CD14-positive monocyte (primary cell): ENCODE measurements at regions of chr4 and their contacts with region 1.

Region 1: DNA sequence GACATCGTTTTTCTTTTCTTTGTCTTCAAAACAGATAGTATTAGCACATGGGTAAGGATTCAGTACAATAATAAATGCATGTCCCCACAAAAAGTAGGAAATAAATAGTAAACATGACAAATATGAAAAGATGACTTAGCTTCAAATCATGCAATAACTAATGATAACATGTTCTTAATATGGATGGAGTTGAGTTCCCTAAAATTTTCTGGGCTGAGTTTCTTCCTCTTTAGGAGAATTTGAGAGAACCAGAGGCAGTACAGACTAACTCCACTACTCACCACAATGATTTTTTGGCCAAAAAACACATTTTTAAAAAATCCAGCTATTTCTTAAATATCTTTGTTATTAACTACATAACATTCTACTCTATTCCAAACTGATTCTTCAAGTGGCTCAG is 432.3 kb upstream of the HS3ST1 start:
- DNase-seq: peak; percentile 14 to 48 (median 30)
- H3K4me3 ChIP-seq: no peak overlapping the region
- H3K4me3 Mint-ChIP-seq: no peak overlapping the region
- H3K27ac ChIP-seq: no peak overlapping the region
- H3K27ac Mint-ChIP-seq: no peak overlapping the region
- H3K4me1 ChIP-seq: peaks cover 22 to 38% of the 10 kb centered on the region in 2 donors
- H3K4me1 Mint-ChIP-seq: peaks cover 42% of the 10 kb centered on the region
- H3K27me3 ChIP-seq: no peaks in the 10 kb centered on the region
- H3K27me3 Mint-ChIP-seq: peaks cover 1 to 3% (median 1%) of the 10 kb centered on the region in 3 donors
- CTCF ChIP-seq: no peak

Region 2: DNA sequence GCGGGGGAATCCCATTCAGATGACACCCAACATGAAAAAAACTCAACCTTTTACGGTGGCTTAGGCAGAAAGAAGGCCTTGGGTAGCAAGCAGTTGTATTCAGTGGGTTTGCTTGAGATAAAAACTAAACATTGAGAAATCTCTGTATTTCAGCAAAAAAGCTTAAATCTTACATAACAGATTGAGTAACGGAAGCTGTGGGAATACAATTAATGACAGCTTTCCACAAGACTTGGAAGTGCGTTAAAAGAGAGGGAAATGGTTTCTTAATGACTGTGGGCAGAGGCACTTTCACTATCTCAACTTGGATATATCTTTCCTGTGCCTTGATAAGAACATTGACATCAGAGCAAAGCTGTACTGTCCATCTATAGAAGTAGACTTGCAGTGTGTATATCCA is 13.8 kb before region 1 on chr4:
- intact Hi-C with region 1: loop called in 1 of 2 experiments (anchors 1 kb)
- DNase-seq: peak; percentile 11 to 56 (median 48)
- H3K4me3 ChIP-seq: peak overlapping the region in 2 of 3 experiments; percentile 12 to 63
- H3K4me3 Mint-ChIP-seq: peak overlapping the region; percentile 56 to 75
- H3K27ac ChIP-seq: peak overlapping the region; percentile 61 to 73
- H3K27ac Mint-ChIP-seq: peak overlapping the region; percentile 68 to 88 (median 82)
- H3K4me1 ChIP-seq: peaks cover 36 to 37% of the 10 kb centered on the region in 2 donors
- H3K4me1 Mint-ChIP-seq: peaks cover 46% of the 10 kb centered on the region
- H3K27me3 ChIP-seq: no peaks in the 10 kb centered on the region
- H3K27me3 Mint-ChIP-seq: peaks cover 0 to 1% (median 0%) of the 10 kb centered on the region in 3 donors
- CTCF ChIP-seq: no peak

Region 3: DNA sequence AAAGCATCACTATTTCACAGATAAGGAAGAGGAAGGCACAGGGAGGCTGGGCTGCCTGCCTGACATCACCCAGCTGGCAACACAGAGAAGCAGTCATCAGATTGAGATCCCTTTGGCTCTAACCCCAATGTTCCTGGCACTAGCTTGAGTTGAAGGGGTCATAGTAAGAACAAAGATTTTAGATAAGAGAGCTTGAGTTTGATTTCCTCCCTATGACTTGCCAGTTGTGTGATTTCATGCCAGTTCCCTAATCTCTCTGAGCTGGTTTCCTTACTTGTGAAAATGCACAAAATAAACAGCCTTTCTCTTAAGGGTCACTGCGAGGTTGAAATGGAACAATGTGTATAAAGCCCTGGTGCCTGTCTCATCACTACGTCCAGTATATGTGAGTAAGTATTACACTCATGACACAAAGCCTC is 43.1 kb after region 1 on chr4:
- intact Hi-C with region 1: no loop called
- DNase-seq: no peak
- H3K4me3 ChIP-seq: no peak overlapping the region
- H3K4me3 Mint-ChIP-seq: no peak overlapping the region
- H3K27ac ChIP-seq: no peak overlapping the region
- H3K27ac Mint-ChIP-seq: no peak overlapping the region
- H3K4me1 ChIP-seq: no peaks in the 10 kb centered on the region
- H3K4me1 Mint-ChIP-seq: peaks cover 3% of the 10 kb centered on the region
- H3K27me3 ChIP-seq: no peaks in the 10 kb centered on the region
- H3K27me3 Mint-ChIP-seq: peaks cover 5 to 10% (median 6%) of the 10 kb centered on the region in 3 donors
- CTCF ChIP-seq: no peak